WTC11 (cell line): ENCODE measurements at regions of chr19 and their contacts with region 1.

Region 1: GRCh38 chr19:38929929-38930775 is at the start of gene SARS2:
- DNase-seq: peak; percentile 94
- ATAC-seq: peak; percentile 55
- H3K4me3 Mint-ChIP-seq: peak within 1 kb of the TSS; percentile 82
- H3K27ac Mint-ChIP-seq: peak within 1 kb of the TSS; percentile 98
- H3K4me1 Mint-ChIP-seq: peaks cover 10% of the 10 kb centered on the region
- H3K27me3 Mint-ChIP-seq: peaks cover 4% of the 10 kb centered on the region; the same call in 1 of the 2 replicates
- CTCF ChIP-seq: peak; percentile 86; the same call in 1 of the 2 replicates
- total RNA-seq, gene SARS2: 66.4 to 74.7 TPM (median 69.6 TPM) in 3 replicates

Region 2: DNA sequence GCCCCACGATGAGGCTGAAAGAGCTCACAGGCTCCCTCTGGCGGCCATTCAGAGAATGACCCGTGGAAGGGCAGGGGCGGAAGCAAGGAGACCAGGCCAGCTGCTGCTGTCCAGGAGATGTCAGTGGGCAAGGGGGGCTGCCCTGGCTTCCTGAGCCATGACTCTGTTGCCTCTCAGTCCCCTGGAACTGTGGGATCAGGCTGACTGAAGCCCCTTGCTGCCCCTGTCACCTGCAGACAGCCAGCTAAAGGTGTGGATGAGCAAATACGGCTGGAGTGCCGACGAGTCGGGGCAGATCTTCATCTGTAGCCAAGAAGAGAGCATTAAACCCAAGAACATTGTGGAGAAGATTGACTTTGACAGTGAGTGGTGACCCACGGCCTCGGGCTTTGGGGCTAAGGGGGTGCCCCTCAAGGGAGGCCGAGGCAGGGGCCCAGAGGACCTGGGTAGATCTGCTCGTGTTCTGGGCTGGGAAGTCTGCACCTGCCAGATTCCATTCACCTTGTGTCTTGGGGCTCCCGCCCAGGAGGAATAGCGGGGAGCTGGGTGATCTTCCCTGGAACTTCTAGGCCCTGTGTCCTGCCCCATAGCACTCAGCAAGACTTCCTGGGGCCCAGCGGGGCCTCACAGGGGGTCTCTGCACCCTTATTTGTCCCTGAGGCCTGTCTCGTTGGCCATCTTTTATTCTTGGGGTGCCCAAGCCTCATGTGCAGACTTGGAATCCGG is 295.2 kb before region 1 on chr19:
- CTCF ChIA-PET with region 1: interaction called, 10 read pairs
- POLR2A ChIA-PET with region 1: no interaction called
- DNase-seq: peak; percentile 84
- ATAC-seq: peak; percentile 23; the same call in 1 of the 2 replicates
- H3K4me3 Mint-ChIP-seq: no peak overlapping the region
- H3K27ac Mint-ChIP-seq: peak overlapping the region; percentile 91
- H3K4me1 Mint-ChIP-seq: peaks cover 34% of the 10 kb centered on the region
- H3K27me3 Mint-ChIP-seq: no peaks in the 10 kb centered on the region
- CTCF ChIP-seq: peak; percentile 97

Region 3: GRCh38 chr19:38656171-38656981 is 273.8 kb before region 1 on chr19:
- CTCF ChIA-PET with region 1: no interaction called
- POLR2A ChIA-PET with region 1: no interaction called
- DNase-seq: no peak
- ATAC-seq: no peak
- H3K4me3 Mint-ChIP-seq: no peak overlapping the region; the same call in 1 of the 2 replicates
- H3K27ac Mint-ChIP-seq: peak overlapping the region; percentile 26
- H3K4me1 Mint-ChIP-seq: peaks cover 98% of the 10 kb centered on the region
- H3K27me3 Mint-ChIP-seq: no peaks in the 10 kb centered on the region
- CTCF ChIP-seq: no peak

Region 4: DNA sequence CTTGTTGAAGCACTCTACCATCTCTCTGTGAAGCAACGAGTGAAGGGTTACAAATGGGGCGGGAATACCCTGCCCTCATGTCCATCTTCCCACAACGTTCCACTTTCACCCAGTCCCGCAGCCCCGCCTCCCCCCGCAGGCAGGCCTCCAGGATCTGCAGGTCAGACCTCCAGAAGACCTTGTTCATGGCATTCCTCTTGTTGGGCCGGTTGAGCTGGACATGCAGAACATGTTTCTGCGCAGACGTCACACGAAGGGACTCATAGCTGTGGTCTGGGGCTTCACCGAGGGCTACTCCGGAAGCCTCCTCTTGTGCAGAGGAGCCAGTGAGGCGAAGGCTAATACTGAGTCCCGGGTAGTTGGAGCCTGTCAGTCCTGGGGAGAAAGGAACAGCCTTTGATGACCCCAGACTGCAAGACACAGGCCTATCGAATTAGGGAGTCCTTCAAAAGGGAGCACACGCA is 99.0 kb before region 1 on chr19:
- CTCF ChIA-PET with region 1: interaction called, 10 read pairs
- POLR2A ChIA-PET with region 1: no interaction called
- DNase-seq: peak; percentile 43
- ATAC-seq: peak; percentile 33
- H3K4me3 Mint-ChIP-seq: peak overlapping the region; percentile 81
- H3K27ac Mint-ChIP-seq: peak overlapping the region; percentile 69
- H3K4me1 Mint-ChIP-seq: peaks cover 24% of the 10 kb centered on the region
- H3K27me3 Mint-ChIP-seq: no peaks in the 10 kb centered on the region; the same call in 1 of the 2 replicates
- CTCF ChIP-seq: no peak

Region 5: GRCh38 chr19:38877781-38878574 is 52.2 kb before region 1 on chr19 and contains the start of gene RINL:
- CTCF ChIA-PET with region 1: interaction called, 26 read pairs
- POLR2A ChIA-PET with region 1: no interaction called
- DNase-seq: no peak
- ATAC-seq: peak; percentile 45
- H3K4me3 Mint-ChIP-seq: peak within 1 kb of the TSS; percentile 39; the same call in 1 of the 2 replicates
- H3K27ac Mint-ChIP-seq: peak within 1 kb of the TSS; percentile 83; the same call in 1 of the 2 replicates
- H3K4me1 Mint-ChIP-seq: peaks cover 26% of the 10 kb centered on the region
- H3K27me3 Mint-ChIP-seq: no peaks in the 10 kb centered on the region; the same call in 1 of the 2 replicates
- CTCF ChIP-seq: no peak
- total RNA-seq, gene RINL: 12.6 to 14.6 TPM (median 14.5 TPM) in 3 replicates

Region 6: GRCh38 chr19:38904581-38905539 is 25.3 kb before region 1 on chr19:
- CTCF ChIA-PET with region 1: interaction called, 32 read pairs
- POLR2A ChIA-PET with region 1: no interaction called
- DNase-seq: no peak
- ATAC-seq: no peak
- H3K4me3 Mint-ChIP-seq: no peak overlapping the region
- H3K27ac Mint-ChIP-seq: no peak overlapping the region
- H3K4me1 Mint-ChIP-seq: peaks cover 8% of the 10 kb centered on the region
- H3K27me3 Mint-ChIP-seq: no peaks in the 10 kb centered on the region
- CTCF ChIP-seq: no peak

Region 7: GRCh38 chr19:38964738-38965137 is 34.6 kb after region 1 on chr19:
- CTCF ChIA-PET with region 1: interaction called, 11 read pairs
- POLR2A ChIA-PET with region 1: no interaction called
- DNase-seq: no peak
- ATAC-seq: no peak
- H3K4me3 Mint-ChIP-seq: no peak overlapping the region
- H3K27ac Mint-ChIP-seq: no peak overlapping the region; the same call in 1 of the 2 replicates
- H3K4me1 Mint-ChIP-seq: peaks cover 9% of the 10 kb centered on the region
- H3K27me3 Mint-ChIP-seq: no peaks in the 10 kb centered on the region
- CTCF ChIP-seq: no peak

Region 8: GRCh38 chr19:39119554-39120229 is 189.5 kb after region 1 on chr19:
- CTCF ChIA-PET with region 1: no interaction called
- POLR2A ChIA-PET with region 1: no interaction called
- DNase-seq: no peak
- ATAC-seq: no peak
- H3K4me3 Mint-ChIP-seq: no peak overlapping the region
- H3K27ac Mint-ChIP-seq: no peak overlapping the region
- H3K4me1 Mint-ChIP-seq: peaks cover 9% of the 10 kb centered on the region
- H3K27me3 Mint-ChIP-seq: no peaks in the 10 kb centered on the region
- CTCF ChIP-seq: no peak